Naive thymus-derived CD8-positive, alpha-beta T cell (primary cell): ENCODE measurements at regions of chr13 and their contacts with region 1.

Region 1: DNA sequence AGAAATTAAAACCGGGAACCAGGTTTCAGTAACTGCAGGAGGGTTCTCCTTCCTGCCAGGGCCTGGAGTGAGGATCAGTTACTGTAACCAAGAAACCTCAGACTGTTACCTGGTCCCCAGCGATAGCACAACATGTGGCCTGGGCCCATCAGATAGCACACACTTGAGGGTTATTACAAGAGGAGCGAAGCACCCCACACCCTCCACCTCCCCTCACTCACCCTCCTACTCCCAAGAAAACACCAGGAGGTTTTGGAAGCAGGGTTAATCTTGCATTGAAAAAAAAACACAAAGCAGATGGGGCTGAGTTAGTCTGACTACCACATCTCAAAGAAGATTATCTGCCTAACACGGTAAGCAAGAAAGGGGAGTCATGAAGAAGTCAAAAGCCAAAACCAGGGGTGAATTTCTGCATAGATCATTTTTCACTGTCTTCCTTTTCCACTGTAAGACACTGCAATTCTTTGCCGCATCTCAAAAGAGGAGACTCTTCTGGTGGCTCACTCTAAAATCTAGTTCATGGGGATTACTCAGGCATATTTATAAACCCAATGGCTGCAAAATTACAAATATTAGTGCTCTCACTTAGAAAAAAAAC is 75.9 kb upstream of the DOCK9 start:
- DNase-seq: peak in 1 of 10 donors; percentile 17
- ATAC-seq: peak; percentile 42 to 48
- H3K4me3 Mint-ChIP-seq: peak overlapping the region; percentile 27 to 87 (median 74)
- H3K27ac Mint-ChIP-seq: peak overlapping the region; percentile 85 to 96 (median 94)
- H3K4me1 Mint-ChIP-seq: peaks cover 44 to 92% (median 90%) of the 10 kb centered on the region in 4 donors
- H3K27me3 Mint-ChIP-seq: peaks cover 0 to 17% (median 0%) of the 10 kb centered on the region in 5 donors

Region 2: DNA sequence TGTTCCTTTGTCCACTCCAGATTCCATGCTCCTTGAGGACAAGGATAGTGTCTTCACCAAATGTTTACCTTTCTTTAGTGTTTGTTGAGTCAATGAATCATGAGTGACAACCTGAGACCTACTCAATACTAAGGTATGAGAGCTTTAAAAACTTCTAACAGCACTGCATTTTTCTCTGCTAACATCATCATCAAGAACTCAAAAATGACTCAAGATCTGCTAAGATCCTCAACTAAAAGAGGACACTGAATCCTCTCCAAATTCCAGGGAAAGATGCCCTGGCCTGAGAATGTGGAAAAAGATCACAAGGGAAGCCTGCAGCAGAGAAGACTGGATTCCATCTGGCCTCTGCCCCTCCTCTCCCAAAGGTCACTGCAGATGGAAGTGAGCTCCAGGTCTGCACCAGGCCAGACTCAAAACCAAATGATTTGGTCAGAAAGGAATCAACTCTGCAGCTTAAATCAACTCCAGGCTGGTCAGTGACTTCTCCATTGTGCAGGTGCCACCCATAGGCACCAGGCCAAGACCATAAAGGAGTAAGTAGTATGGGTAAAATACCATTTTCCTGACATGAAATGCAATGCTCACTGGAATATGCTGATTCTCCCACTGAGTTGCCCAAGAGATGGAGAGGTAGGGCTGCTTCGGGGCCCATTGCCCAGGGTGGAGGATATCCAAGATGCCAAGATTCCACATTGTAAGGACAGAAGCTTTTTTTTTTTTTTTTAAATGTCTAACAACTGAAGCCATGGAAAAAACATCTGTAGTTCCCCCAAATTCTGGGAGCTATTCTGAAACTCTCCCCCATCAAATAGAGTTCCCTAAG is 13.6 kb after region 1 on chr13:
- POLR2A ChIA-PET with region 1: interaction called, 10 read pairs
- DNase-seq: no peak
- ATAC-seq: no peak
- H3K4me3 Mint-ChIP-seq: peak overlapping the region in 9 of 10 donors; percentile 48 to 73 (median 68)
- H3K27ac Mint-ChIP-seq: peak overlapping the region; percentile 58 to 91 (median 74)
- H3K4me1 Mint-ChIP-seq: peaks cover 47 to 87% (median 81%) of the 10 kb centered on the region in 4 donors
- H3K27me3 Mint-ChIP-seq: peaks cover 0 to 5% (median 0%) of the 10 kb centered on the region in 5 donors

Region 3: DNA sequence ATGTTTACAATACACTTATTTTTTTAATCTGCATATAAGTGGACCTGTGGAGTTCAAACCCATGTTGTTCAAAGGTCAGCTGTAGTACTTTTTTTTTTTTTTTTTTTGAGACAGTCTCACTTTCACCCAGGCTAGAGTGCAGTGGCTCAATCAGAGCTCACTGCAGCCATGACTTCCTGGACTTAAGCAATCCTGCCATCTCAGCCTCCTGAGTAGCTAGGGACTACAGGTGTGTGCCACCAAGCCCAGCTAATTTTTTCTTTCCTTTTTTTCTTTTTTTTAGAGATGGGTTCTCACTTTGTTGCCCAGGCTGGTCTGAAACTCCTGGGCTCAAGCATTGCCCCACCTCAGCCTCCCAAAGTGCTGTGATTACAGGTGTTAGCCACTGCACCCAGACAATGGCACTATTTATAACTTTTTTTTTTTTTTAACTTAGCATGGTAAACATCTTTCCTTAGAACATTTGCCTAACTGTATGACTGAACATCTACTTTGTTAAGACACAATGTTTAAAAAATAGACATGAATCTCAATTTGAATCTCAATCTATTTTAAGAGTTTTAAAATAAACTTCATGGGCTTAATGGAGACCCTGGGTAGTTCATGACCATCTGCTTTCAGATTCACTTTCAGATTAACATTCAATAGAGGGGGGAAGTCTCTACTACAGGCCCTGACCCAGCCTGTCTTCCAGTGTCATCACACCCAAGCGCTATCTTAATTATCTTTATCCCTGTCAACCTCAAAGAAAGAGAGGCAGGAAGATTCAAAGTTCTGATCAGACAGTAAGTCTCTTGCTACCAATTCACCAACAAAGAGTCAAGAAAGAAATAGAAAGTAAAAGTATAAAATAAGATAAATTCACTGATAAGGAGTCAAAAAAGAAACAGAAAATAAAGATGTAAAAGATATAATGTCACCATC is 21.8 kb after region 1 on chr13:
- POLR2A ChIA-PET with region 1: interaction called, 15 read pairs
- DNase-seq: peak in 3 of 10 donors; percentile 46 to 54 (median 51)
- ATAC-seq: peak; percentile 75 to 82
- H3K4me3 Mint-ChIP-seq: peak overlapping the region; percentile 50 to 82 (median 71)
- H3K27ac Mint-ChIP-seq: peak overlapping the region; percentile 76 to 98 (median 92)
- H3K4me1 Mint-ChIP-seq: peaks cover 41 to 95% (median 86%) of the 10 kb centered on the region in 4 donors
- H3K27me3 Mint-ChIP-seq: peaks cover 0 to 4% (median 0%) of the 10 kb centered on the region in 5 donors

Region 4: GRCh38 chr13:99228737-99229691 is 175.3 kb after region 1 on chr13:
- POLR2A ChIA-PET with region 1: no interaction called
- DNase-seq: peak in 1 of 10 donors; percentile 24
- ATAC-seq: peak; percentile 49 to 58
- H3K4me3 Mint-ChIP-seq: peak overlapping the region; percentile 66 to 89 (median 81)
- H3K27ac Mint-ChIP-seq: peak overlapping the region; percentile 73 to 95 (median 90)
- H3K4me1 Mint-ChIP-seq: peaks cover 42 to 91% (median 79%) of the 10 kb centered on the region in 4 donors
- H3K27me3 Mint-ChIP-seq: no peaks in the 10 kb centered on the region